Activated CD4-positive, alpha-beta T cell treated with anti-CD3 and anti-CD28 coated beads for 36 hours (primary cell): ENCODE measurements at regions of chr7 and their contacts with region 1.

Region 1: GRCh38 chr7:77393269-77393668 is 22.9 kb downstream of the GSAP start:
- DNase-seq: peak; percentile 72
- ATAC-seq: peak; percentile 98
- H3K4me3 Mint-ChIP-seq: no peak overlapping the region
- H3K27ac Mint-ChIP-seq: no peak overlapping the region
- H3K4me1 Mint-ChIP-seq: peaks cover 26% of the 10 kb centered on the region
- H3K27me3 Mint-ChIP-seq: no peaks in the 10 kb centered on the region

Region 2: DNA sequence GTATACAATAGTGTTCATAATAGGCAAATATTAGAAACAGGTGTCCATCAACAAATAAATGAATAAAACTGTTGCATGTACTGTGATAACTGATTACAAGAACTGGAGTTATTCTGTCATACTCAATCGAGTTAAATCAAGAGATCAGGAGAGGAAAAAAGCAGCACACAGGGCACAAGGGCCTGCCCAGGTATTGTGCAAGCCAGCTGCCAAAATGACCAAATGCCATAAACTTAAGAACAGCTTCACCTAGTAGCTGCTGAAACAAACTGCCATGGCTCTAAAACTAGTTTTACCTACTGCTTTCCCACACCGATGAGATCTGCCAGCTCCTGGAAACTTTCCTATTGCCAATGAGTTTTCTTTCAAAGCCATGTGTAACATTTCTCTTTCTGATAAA is 10.7 kb after region 1 on chr7:
- CTCF ChIA-PET with region 1: no interaction called
- POLR2A ChIA-PET with region 1: no interaction called
- intact Hi-C with region 1: no loop called
- DNase-seq: no peak
- ATAC-seq: no peak
- H3K4me3 Mint-ChIP-seq: no peak overlapping the region
- H3K27ac Mint-ChIP-seq: no peak overlapping the region
- H3K4me1 Mint-ChIP-seq: no peaks in the 10 kb centered on the region
- H3K27me3 Mint-ChIP-seq: no peaks in the 10 kb centered on the region

Region 3: GRCh38 chr7:77415823-77416622 is 22.8 kb after region 1 on chr7 and contains the start of gene GSAP:
- CTCF ChIA-PET with region 1: interaction called, 3 read pairs
- POLR2A ChIA-PET with region 1: no interaction called
- intact Hi-C with region 1: loop called in 1 of 2 experiments (anchors 1 kb)
- DNase-seq: peak; percentile 62
- ATAC-seq: peak; percentile 46
- H3K4me3 Mint-ChIP-seq: peak within 1 kb of the TSS; percentile 52
- H3K27ac Mint-ChIP-seq: peak within 1 kb of the TSS; percentile 25
- H3K4me1 Mint-ChIP-seq: peaks cover 41% of the 10 kb centered on the region
- H3K27me3 Mint-ChIP-seq: peaks cover 10% of the 10 kb centered on the region
- total RNA-seq, gene GSAP: 1.1 to 1.4 TPM

Region 4: GRCh38 chr7:77460057-77460486 is 66.8 kb after region 1 on chr7:
- CTCF ChIA-PET with region 1: no interaction called
- POLR2A ChIA-PET with region 1: no interaction called
- intact Hi-C with region 1: loop called (anchors 5 kb)
- DNase-seq: no peak
- ATAC-seq: no peak
- H3K4me3 Mint-ChIP-seq: no peak overlapping the region
- H3K27ac Mint-ChIP-seq: no peak overlapping the region
- H3K4me1 Mint-ChIP-seq: peaks cover 14% of the 10 kb centered on the region
- H3K27me3 Mint-ChIP-seq: no peaks in the 10 kb centered on the region